PC-3 (cell line): ENCODE measurements at regions of chr11 and their contacts with region 1.

Region 1: DNA sequence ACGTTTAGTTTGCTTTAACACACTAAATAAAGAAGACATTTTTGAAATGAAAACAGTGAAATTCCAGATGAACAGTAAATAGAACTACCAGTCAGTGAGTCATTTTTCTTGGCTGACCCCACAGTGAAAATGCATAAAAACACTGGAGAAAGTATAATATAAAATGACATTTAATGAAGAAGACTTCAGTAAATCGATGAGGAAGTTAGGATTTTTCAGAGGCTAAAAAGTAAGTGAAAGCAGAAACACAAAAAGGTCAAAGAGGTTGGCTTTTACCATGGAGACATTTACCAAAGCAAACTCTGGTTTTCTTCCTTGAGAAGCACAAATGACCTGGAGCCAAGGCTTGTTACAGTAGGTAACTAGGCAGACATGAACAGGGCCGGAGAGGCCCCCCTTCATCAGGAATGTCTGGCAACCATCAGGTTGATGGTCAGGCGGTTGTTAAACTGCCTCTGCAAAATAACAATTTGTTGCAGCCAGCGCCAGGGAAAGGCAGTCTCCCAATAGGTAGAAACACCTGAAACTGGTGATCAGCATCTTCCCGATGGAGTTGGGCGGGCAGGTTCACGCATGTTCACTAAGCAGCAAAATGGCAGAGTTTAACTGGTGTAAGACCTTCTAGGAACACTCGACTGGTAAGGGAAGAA is 16.7 kb upstream of the TMEM123 start:
- DNase-seq: peak; percentile 78
- ATAC-seq: peak; percentile 76
- H3K4me3 ChIP-seq: peak overlapping the region; percentile 8; the same call in 1 of the 2 replicates
- H3K27ac ChIP-seq: peak overlapping the region; percentile 72
- H3K4me1 ChIP-seq: peaks cover 46% of the 10 kb centered on the region
- H3K27me3 ChIP-seq: no peaks in the 10 kb centered on the region
- CTCF ChIP-seq: no peak

Region 2: DNA sequence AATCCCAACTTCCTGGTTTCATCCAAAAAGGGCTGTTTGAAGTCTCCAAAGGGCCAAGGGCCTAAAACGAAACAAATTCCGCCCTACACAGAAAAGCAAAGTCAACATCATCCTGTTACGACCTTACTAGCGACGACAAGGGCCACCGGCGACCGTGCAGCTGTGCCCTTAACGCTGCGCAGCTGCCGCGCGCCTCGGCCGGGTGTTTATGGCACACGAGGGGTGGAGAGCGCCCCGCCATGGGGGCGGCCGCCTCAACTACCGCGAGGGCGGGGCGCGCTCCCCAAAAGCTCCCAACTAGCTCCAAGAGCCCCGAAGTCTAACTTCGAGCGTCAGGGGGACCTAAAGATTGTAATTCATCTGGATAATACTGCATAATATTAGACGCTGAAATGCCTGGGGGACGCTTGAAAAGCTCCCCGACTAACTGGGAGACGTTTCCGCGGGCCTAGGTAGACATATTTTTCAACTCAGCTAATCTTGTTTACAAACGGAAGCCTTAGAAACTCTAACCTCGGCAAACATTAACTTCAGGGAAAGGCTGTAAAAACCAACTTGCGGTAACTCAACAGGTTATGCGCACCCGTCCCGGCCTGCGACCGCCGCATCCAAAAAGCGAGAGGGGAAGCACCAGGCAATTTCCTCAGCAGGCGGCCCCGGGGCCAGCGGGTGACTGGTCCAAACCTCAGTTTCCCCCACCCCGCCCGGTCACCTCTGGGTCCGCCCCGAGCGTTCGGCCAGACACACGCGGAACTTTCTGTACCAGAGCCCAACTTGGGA is 17.4 kb before region 1 on chr11:
- CTCF ChIA-PET with region 1: interaction called, 3 read pairs
- POLR2A ChIA-PET with region 1: no interaction called
- intact Hi-C with region 1: loop called (anchors 1 kb)
- DNase-seq: peak; percentile 67
- ATAC-seq: peak; percentile 49
- H3K4me3 ChIP-seq: peak overlapping the region; percentile 81
- H3K27ac ChIP-seq: peak overlapping the region; percentile 65
- H3K4me1 ChIP-seq: peaks cover 56% of the 10 kb centered on the region
- H3K27me3 ChIP-seq: no peaks in the 10 kb centered on the region
- CTCF ChIP-seq: peak; percentile 44; the same call in 1 of the 2 replicates

Region 3: GRCh38 chr11:102457865-102458264 is 11.4 kb before region 1 on chr11:
- CTCF ChIA-PET with region 1: no interaction called
- POLR2A ChIA-PET with region 1: no interaction called
- intact Hi-C with region 1: loop called (anchors 1 kb)
- DNase-seq: peak; percentile 55
- ATAC-seq: no peak
- H3K4me3 ChIP-seq: no peak overlapping the region
- H3K27ac ChIP-seq: 0 out of 2 replicates have a peak overlapping the region, but pooled peaks have one; percentile 13
- H3K4me1 ChIP-seq: peaks cover 39% of the 10 kb centered on the region
- H3K27me3 ChIP-seq: no peaks in the 10 kb centered on the region
- CTCF ChIP-seq: no peak